PC-9 (cell line): ENCODE measurements at regions of chr11 and their contacts with region 1.

Region 1: GRCh38 chr11:83773950-83774880 is 488.0 kb upstream of the CCDC90B start:
- DNase-seq: no peak
- H3K4me3 ChIP-seq: no peak overlapping the region
- H3K27ac ChIP-seq: no peak overlapping the region
- H3K4me1 ChIP-seq: no peaks in the 10 kb centered on the region
- H3K27me3 ChIP-seq: peaks cover 6% of the 10 kb centered on the region; the same call in 1 of the 2 replicates
- CTCF ChIP-seq: no peak

Region 2: GRCh38 chr11:83847467-83848034 is 73.3 kb after region 1 on chr11:
- CTCF ChIA-PET with region 1: no interaction called
- POLR2A ChIA-PET with region 1: no interaction called
- intact Hi-C with region 1: loop called (anchors 2 kb)
- DNase-seq: no peak
- H3K4me3 ChIP-seq: no peak overlapping the region
- H3K27ac ChIP-seq: no peak overlapping the region
- H3K4me1 ChIP-seq: no peaks in the 10 kb centered on the region
- H3K27me3 ChIP-seq: peaks cover 18% of the 10 kb centered on the region
- CTCF ChIP-seq: no peak